ENCODE measurements at regions of chr4 and their contacts with region 1.

Region 1: GRCh38 chr4:48203819-48204218 is 65.8 kb downstream of the TEC start:
- DNase-seq: no peak
- ATAC-seq: peak; percentile 48
- H3K4me3 ChIP-seq: peak overlapping the region; percentile 33; the same call in 1 of the 2 replicates
- H3K27ac ChIP-seq: peak overlapping the region; percentile 84
- H3K4me1 ChIP-seq: peaks cover 73% of the 10 kb centered on the region
- H3K27me3 ChIP-seq: no peaks in the 10 kb centered on the region
- CTCF ChIP-seq: no peak
- EP300 ChIP-seq: peak in 1 of 2 experiments; percentile 19; a peak in 1 of 4 replicates
- POLR2A ChIP-seq: no peak; the same call in 1 of the 2 replicates
- RAD21 ChIP-seq: no peak

Region 2: GRCh38 chr4:48141048-48141447 is 62.8 kb before region 1 on chr4:
- CTCF ChIA-PET with region 1: interaction called, 7 read pairs
- POLR2A ChIA-PET with region 1: no interaction called
- RAD21 ChIA-PET with region 1: interaction called, 8 read pairs
- SMC1A ChIA-PET with region 1: interaction called, 19 read pairs
- in situ Hi-C with region 1: no loop called
- intact Hi-C with region 1: no loop called
- DNase-seq: no peak
- ATAC-seq: peak; percentile 75
- H3K4me3 ChIP-seq: no peak overlapping the region
- H3K27ac ChIP-seq: no peak overlapping the region
- H3K4me1 ChIP-seq: peaks cover 17% of the 10 kb centered on the region
- H3K27me3 ChIP-seq: no peaks in the 10 kb centered on the region
- CTCF ChIP-seq: peak; percentile 21 to 55 (median 49); a peak in 4 of 6 replicates
- EP300 ChIP-seq: no peak
- POLR2A ChIP-seq: no peak
- RAD21 ChIP-seq: peak; percentile 37; the same call in 1 of the 2 replicates

Region 3: DNA sequence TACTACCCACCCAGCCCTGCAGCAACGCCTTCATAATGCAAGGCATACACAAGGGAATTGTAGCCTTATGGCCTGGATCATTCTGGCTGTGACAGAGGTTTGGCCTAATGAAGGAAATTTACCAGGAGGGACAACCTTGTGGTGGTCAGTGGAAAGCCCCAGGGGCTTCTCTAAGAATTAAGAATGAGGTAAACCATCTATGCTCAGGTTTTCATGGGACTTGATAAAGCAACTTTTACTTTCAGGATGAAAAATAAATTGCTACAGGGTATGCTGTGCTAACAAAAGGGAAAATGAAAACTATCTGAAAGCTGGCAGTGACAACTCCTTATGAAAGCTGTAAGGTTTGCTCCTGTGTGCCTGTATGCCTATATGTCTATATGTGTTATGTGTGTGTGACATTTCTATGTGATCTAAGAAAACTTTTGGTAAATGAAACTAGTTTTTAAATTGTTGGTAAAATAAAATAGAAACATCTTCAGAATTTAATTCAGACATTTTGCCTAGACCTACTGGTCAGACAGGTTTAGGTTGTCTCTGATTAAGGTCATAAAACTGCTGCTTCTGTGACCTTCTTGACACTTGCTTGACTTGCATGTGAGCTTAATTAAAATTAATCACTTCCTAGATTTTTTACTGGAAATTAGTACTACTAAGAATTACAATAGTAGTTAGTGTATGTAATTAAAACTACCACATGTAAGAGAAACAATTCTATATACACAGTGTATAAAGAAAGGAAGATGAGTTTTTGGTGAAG is 49.8 kb before region 1 on chr4:
- CTCF ChIA-PET with region 1: interaction called, 5 read pairs
- POLR2A ChIA-PET with region 1: no interaction called
- RAD21 ChIA-PET with region 1: interaction called, 3 read pairs
- SMC1A ChIA-PET with region 1: interaction called, 10 read pairs
- in situ Hi-C with region 1: no loop called
- intact Hi-C with region 1: no loop called
- DNase-seq: peak; percentile 39
- ATAC-seq: peak; percentile 91
- H3K4me3 ChIP-seq: no peak overlapping the region
- H3K27ac ChIP-seq: peak overlapping the region; percentile 63
- H3K4me1 ChIP-seq: peaks cover 6% of the 10 kb centered on the region; the same call in 1 of the 2 replicates
- H3K27me3 ChIP-seq: no peaks in the 10 kb centered on the region
- CTCF ChIP-seq: no peak
- EP300 ChIP-seq: no peak
- POLR2A ChIP-seq: no peak
- RAD21 ChIP-seq: no peak

Region 4: DNA sequence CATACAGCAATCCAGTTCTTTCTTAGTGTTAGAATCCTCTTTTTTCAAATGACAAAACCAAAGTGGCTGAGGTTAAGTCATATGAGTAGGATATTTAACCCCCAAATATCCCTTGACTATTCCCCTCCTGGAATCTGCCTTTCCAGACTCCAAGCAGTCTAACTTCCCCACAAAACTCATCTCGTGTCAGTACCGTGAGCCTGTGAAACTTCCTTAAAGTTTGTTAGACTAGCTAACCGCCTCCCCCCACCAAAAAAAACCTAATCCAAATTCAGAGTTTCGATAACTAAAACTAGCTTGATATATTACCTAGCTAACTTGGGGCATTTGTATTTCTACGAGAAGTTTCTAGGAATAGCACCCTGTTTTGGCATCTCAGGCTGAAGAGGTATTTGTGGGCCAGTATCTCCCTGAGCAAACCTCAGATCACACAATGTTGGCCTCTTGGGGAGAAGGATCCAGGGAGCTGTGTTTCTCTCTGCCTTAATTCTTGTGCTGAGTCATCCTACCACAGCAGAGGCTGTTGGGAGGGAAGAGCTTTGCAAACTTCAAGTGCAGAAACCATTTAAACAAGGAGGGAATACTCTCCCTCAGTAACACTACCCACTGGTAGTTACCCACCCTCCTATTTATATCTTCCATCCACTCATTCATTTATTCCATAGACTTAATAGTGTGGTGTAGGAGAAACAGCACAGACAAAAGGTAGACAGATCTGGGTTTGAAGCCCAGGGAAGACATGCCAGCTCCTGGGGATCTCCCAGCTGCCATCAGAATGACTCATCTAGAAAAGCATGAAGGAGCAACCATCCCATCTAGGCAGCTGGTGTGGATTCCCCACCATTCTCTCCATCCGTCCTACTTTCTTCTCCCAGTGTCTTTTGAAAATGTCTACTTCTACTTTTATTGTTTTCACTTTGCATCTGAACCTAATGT is 30.5 kb before region 1 on chr4:
- CTCF ChIA-PET with region 1: interaction called, 19 read pairs
- POLR2A ChIA-PET with region 1: interaction called, 4 read pairs
- RAD21 ChIA-PET with region 1: interaction called, 19 read pairs
- SMC1A ChIA-PET with region 1: interaction called, 36 read pairs
- in situ Hi-C with region 1: no loop called
- intact Hi-C with region 1: no loop called
- DNase-seq: peak; percentile 55
- ATAC-seq: peak; percentile 85
- H3K4me3 ChIP-seq: no peak overlapping the region
- H3K27ac ChIP-seq: peak overlapping the region; percentile 59
- H3K4me1 ChIP-seq: peaks cover 36% of the 10 kb centered on the region
- H3K27me3 ChIP-seq: no peaks in the 10 kb centered on the region
- CTCF ChIP-seq: no peak
- EP300 ChIP-seq: no peak; a peak in 1 of 4 replicates
- POLR2A ChIP-seq: no peak
- RAD21 ChIP-seq: no peak

Region 5: DNA sequence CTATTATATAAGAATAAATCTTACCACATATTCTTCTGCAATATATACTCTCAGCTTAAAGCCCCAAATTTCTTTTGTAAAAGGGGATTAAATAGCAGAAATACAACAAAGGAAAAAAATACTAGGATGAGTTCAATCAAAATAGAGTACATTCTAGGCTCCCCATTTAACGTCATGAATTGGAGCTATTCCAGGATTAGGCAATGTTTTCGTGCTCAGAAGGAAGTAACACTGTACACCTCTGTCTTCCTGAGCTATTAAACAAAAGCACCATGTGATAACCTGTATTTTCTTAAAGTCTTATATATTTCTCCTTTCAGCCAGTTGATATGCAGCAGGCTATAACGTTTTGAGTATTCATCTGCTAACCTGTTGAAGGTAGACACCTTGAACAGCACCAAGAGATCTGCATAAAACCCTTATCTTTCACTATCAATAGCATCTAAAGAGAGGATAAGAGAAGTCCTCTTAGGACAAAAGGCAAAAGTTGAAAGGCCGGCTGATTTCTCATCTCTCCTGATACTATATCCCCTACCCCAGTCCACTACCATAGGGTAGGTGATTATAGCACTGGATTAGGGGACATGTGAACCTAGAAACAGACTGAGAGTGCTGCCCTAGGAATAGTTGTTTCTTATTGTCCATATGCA is 34.3 kb after region 1 on chr4:
- CTCF ChIA-PET with region 1: interaction called, 4 read pairs
- POLR2A ChIA-PET with region 1: interaction called, 17 read pairs
- RAD21 ChIA-PET with region 1: interaction called, 5 read pairs
- SMC1A ChIA-PET with region 1: interaction called, 124 read pairs
- in situ Hi-C with region 1: no loop called
- intact Hi-C with region 1: no loop called
- DNase-seq: no peak
- ATAC-seq: no peak
- H3K4me3 ChIP-seq: no peak overlapping the region
- H3K27ac ChIP-seq: no peak overlapping the region
- H3K4me1 ChIP-seq: peaks cover 7% of the 10 kb centered on the region
- H3K27me3 ChIP-seq: no peaks in the 10 kb centered on the region
- CTCF ChIP-seq: no peak
- EP300 ChIP-seq: no peak
- POLR2A ChIP-seq: no peak
- RAD21 ChIP-seq: no peak

Region 6: DNA sequence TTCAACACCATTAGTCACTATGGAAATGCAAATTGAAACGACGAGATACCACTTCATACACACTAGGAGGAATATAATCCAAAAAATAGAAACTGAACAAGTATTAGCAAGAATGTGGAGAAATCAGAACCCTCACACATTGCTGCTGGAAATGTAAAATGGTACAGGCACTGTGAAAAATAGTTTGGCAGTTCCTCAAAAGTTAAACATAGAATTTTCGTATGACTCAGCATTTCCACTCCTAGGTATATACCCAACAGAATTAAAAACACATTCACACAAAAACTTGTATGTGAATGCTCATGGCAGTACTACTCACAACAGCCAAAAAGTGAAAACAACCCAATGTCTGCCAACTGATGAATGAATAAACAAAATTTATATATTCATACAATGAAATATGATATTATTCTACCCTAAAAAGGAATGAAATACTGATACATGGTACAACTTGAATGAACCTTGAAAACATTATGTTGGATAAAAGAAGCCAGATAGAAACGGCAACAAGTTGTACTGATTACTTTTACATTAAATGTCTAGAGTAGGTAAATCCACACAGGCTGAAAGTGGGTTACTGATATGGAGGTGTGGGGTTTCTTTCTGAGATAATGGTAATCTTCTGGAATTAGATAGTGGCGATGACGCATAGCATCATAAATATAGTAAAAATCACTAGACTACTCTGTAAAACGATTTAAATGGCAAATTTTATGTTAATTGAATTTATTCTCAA is 43.5 kb after region 1 on chr4:
- CTCF ChIA-PET with region 1: interaction called, 5 read pairs
- POLR2A ChIA-PET with region 1: interaction called, 17 read pairs
- RAD21 ChIA-PET with region 1: no interaction called
- SMC1A ChIA-PET with region 1: interaction called, 5 read pairs
- in situ Hi-C with region 1: no loop called
- intact Hi-C with region 1: no loop called
- DNase-seq: peak; percentile 51
- ATAC-seq: peak; percentile 74
- H3K4me3 ChIP-seq: 0 out of 2 replicates have a peak overlapping the region, but pooled peaks have one; percentile 25
- H3K27ac ChIP-seq: peak overlapping the region; percentile 79
- H3K4me1 ChIP-seq: peaks cover 28% of the 10 kb centered on the region
- H3K27me3 ChIP-seq: no peaks in the 10 kb centered on the region
- CTCF ChIP-seq: no peak
- EP300 ChIP-seq: no peak
- POLR2A ChIP-seq: no peak
- RAD21 ChIP-seq: no peak

Measured in GM12878 (cell line).